ENCODE measurements at regions of chr2 and their contacts with region 1.

Region 1: GRCh38 chr2:17765408-17765807 is 11.5 kb downstream of the GEN1 start:
- DNase-seq: no peak
- ATAC-seq: no peak

Region 2: DNA sequence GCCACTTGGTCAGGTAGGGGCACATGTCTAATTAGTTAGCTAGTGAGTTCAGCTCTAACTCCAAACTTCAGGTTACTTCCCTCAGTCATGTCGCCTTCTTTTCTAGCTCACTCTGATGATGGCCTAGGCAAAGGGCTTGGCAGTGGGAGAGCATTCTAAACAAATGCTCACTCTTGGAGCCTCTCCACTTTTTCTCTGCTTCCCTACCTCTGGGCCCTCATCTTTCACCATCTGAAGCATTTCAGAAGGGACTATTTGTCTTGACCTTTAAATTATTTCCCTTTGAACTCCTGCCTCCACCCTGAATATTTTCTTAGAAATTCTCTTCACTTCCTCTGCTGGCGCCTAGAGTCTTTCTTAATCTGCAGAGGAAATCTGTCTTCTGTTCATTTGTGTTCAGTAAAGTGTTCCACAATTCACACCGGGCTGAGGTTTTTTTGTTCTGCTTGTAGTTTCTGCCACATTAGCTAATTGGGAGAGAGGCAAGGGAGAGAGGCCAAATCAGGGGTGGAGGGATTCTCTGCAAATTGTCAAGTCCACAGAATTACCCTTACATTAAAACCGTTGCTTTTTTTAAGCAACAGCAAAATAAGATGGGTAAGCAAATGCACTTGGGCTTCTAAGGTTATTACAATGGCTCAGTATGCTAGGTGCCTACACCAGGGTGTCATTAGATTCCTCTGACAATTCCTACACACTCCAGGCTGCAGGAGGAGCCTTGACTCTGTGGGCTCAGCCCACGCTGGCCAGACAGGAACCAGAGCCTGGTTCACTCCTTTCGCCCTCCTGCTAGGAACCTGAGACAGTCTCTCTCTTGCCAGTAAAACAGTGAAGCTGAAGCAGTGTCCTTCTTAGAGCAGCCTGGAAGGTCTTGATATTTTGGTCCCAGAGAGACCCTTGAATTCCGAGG is 56.4 kb after region 1 on chr2:
- intact Hi-C with region 1: loop called (anchors 5 kb)
- DNase-seq: no peak
- ATAC-seq: peak; percentile 56

Region 3: GRCh38 chr2:17878281-17879100 is 113.1 kb after region 1 on chr2 and contains the start of gene KCNS3:
- intact Hi-C with region 1: no loop called
- DNase-seq: peak; percentile 79
- ATAC-seq: peak; percentile 95
- total RNA-seq, gene KCNS3: 4.5 TPM

Measured in Right ventricle myocardium inferior (tissue), 1 donor.